A673 (cell line): ENCODE measurements at regions of chr13 and their contacts with region 1.

Region 1: GRCh38 chr13:81872581-81872980 is 1531.7 kb upstream of the SPRY2 start:
- DNase-seq: peak; percentile 16
- H3K4me3 ChIP-seq: no peak overlapping the region
- H3K27ac ChIP-seq: no peak overlapping the region
- H3K4me1 ChIP-seq: no peaks in the 10 kb centered on the region
- H3K27me3 ChIP-seq: no peaks in the 10 kb centered on the region
- CTCF ChIP-seq: peak; percentile 48

Region 2: DNA sequence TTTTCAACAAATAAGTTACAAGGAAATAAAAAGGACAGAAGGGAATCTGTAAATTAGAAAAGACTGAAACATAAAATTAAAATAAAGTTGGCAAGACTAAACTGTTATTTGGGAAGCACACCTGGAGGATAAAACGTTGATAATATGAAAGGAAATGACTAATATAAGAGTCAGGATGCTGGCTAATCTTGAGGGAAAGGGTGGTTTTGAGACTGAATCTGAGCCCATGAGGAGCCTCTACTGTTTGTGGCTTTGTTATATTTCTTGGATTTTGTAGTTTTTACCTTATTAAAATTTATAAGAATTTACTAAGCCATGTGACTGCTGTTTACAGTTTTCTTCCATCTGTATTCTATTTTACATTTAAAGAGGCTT is 813.7 kb before region 1 on chr13:
- CTCF ChIA-PET with region 1: no interaction called
- POLR2A ChIA-PET with region 1: no interaction called
- intact Hi-C with region 1: loop called (anchors 10 kb)
- DNase-seq: no peak
- H3K4me3 ChIP-seq: no peak overlapping the region
- H3K27ac ChIP-seq: no peak overlapping the region
- H3K4me1 ChIP-seq: no peaks in the 10 kb centered on the region
- H3K27me3 ChIP-seq: no peaks in the 10 kb centered on the region
- CTCF ChIP-seq: no peak

Region 3: DNA sequence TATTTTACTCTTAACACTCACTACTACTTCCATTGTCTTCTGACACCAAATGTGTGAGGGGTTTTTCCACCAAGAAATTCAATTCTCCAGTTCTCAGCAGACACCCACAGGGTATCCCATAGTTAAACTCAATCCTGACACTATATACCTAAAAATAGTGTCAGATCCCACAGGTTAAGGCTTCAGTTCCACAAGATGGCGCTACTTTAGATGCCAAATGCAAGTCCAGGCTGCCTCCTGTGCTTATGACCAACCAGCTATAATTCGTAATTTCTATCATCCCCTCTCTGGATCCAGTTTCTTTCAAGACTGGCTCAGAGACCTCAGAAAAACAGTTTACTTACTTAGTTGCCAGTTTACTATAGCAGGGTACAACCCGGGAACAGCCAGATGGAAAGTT is 385.4 kb before region 1 on chr13:
- CTCF ChIA-PET with region 1: interaction called, 3 read pairs
- POLR2A ChIA-PET with region 1: no interaction called
- intact Hi-C with region 1: loop called (anchors 5 kb)
- DNase-seq: peak; percentile 65
- H3K4me3 ChIP-seq: no peak overlapping the region
- H3K27ac ChIP-seq: no peak overlapping the region
- H3K4me1 ChIP-seq: no peaks in the 10 kb centered on the region
- H3K27me3 ChIP-seq: no peaks in the 10 kb centered on the region
- CTCF ChIP-seq: peak; percentile 71

Region 4: GRCh38 chr13:81639984-81640582 is 232.5 kb before region 1 on chr13:
- CTCF ChIA-PET with region 1: no interaction called
- POLR2A ChIA-PET with region 1: no interaction called
- intact Hi-C with region 1: loop called (anchors 2 kb)
- DNase-seq: peak; percentile 51
- H3K4me3 ChIP-seq: no peak overlapping the region
- H3K27ac ChIP-seq: no peak overlapping the region
- H3K4me1 ChIP-seq: no peaks in the 10 kb centered on the region
- H3K27me3 ChIP-seq: no peaks in the 10 kb centered on the region
- CTCF ChIP-seq: peak; percentile 69

Region 5: DNA sequence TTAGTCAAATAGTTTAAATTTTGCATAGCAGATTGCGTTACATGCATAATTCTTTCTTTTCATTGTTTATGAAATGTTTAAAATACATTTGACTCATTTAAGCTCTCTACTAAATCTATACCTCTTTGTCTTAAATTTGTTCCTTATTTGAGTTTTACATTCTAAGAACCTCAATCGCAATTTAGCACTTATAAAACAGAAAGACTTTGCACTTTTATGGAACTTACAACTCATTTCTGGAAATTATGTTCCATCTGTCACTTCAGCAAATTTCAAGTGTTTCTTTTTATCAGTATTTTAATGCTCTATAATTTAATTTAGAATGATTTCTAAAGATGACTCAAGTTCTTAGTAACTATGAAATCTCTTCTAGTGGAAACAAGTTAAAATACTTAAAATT is 25.8 kb before region 1 on chr13:
- CTCF ChIA-PET with region 1: no interaction called
- POLR2A ChIA-PET with region 1: no interaction called
- intact Hi-C with region 1: no loop called
- DNase-seq: no peak
- H3K4me3 ChIP-seq: no peak overlapping the region
- H3K27ac ChIP-seq: no peak overlapping the region
- H3K4me1 ChIP-seq: no peaks in the 10 kb centered on the region
- H3K27me3 ChIP-seq: no peaks in the 10 kb centered on the region
- CTCF ChIP-seq: no peak

Region 6: GRCh38 chr13:82593239-82593638 is 720.7 kb after region 1 on chr13:
- CTCF ChIA-PET with region 1: no interaction called
- POLR2A ChIA-PET with region 1: no interaction called
- intact Hi-C with region 1: no loop called
- DNase-seq: no peak
- H3K4me3 ChIP-seq: no peak overlapping the region
- H3K27ac ChIP-seq: no peak overlapping the region
- H3K4me1 ChIP-seq: no peaks in the 10 kb centered on the region
- H3K27me3 ChIP-seq: no peaks in the 10 kb centered on the region
- CTCF ChIP-seq: no peak